A549 (cell line): ENCODE measurements at regions of chr10 and their contacts with region 1.

Region 1: GRCh38 chr10:77846718-77847630 is 79.6 kb downstream of the DLG5 start:
- DNase-seq: peak; percentile 67 to 73
- ATAC-seq: peak; percentile 73 to 83
- H3K4me3 ChIP-seq: no peak overlapping the region
- H3K27ac ChIP-seq: peak overlapping the region; percentile 60 to 89; a peak in 5 of 6 replicates
- H3K4me1 ChIP-seq: peaks cover 44% of the 10 kb centered on the region
- CTCF ChIP-seq: peak; percentile 77
- EP300 ChIP-seq: no peak
- POLR2A ChIP-seq: no peak
- RAD21 ChIP-seq: peak; percentile 79 to 80

Region 2: DNA sequence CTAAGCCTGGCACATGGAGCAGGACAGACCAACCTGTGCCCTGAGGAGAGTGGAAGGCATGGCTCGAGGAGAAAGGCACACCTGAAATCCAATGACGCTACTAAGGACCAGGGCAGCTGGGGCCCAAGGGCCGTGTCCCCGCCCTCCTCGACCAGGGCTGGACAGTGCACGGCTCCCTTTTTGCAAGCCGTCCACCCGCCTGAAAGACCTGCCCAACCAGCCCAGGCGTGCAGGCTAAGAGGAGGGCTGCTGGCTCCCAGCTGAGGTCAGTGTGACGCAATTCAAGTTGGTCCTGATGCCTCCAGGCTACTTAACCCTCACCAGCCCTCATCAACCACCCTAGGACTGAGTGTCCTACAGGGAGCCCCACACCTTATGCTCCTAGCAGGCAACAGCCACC is 10.3 kb after region 1 on chr10:
- CTCF ChIA-PET with region 1: interaction called, 34 read pairs
- POLR2A ChIA-PET with region 1: no interaction called
- DNase-seq: no peak
- ATAC-seq: no peak
- H3K4me3 ChIP-seq: no peak overlapping the region
- H3K27ac ChIP-seq: no peak overlapping the region
- H3K4me1 ChIP-seq: 0 out of 3 replicates have a peak, but pooled peaks cover 5% of the 10 kb centered on the region
- CTCF ChIP-seq: no peak
- EP300 ChIP-seq: no peak
- POLR2A ChIP-seq: no peak
- RAD21 ChIP-seq: no peak

Region 3: GRCh38 chr10:77862595-77862994 is 15.6 kb after region 1 on chr10:
- CTCF ChIA-PET with region 1: interaction called, 34 read pairs
- POLR2A ChIA-PET with region 1: no interaction called
- DNase-seq: no peak
- ATAC-seq: no peak
- H3K4me3 ChIP-seq: no peak overlapping the region
- H3K27ac ChIP-seq: no peak overlapping the region
- H3K4me1 ChIP-seq: 0 out of 3 replicates have a peak, but pooled peaks cover 5% of the 10 kb centered on the region
- CTCF ChIP-seq: no peak
- EP300 ChIP-seq: no peak
- POLR2A ChIP-seq: no peak
- RAD21 ChIP-seq: no peak